ENCODE measurements at regions of chr10 and their contacts with region 1.

Region 1: DNA sequence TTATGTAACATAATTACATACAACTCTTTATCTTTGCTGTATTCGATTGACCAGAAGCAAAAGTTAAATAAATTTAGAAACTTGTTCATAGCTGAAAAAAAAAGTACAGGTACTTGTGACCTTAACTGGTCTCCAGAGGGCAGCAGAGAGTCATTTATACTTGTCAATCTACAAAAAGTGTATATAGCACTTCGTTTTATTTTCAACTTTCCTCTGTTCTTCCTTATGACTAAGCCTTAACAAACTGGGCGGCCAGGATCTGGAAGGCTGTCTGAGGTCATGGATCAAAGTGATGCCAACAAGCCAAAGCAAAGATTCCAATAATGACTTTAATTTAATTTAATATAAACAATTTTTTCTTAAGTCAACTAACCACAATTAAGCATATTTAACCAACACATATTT is 29.8 kb downstream of the C10orf67 start:
- DNase-seq: peak; percentile 48
- H3K4me3 ChIP-seq: no peak overlapping the region
- H3K27ac ChIP-seq: no peak overlapping the region
- H3K4me1 ChIP-seq: peaks cover 2 to 6% of the 10 kb centered on the region in 2 experiments; a peak in 2 of 4 replicates
- H3K27me3 ChIP-seq: no peaks in the 10 kb centered on the region
- CTCF ChIP-seq: peak; percentile 85
- EP300 ChIP-seq: peak in 1 of 2 experiments; percentile 40; a peak in 1 of 4 replicates
- RAD21 ChIP-seq: peak; percentile 91

Region 2: GRCh38 chr10:23293145-23293724 is 21.6 kb before region 1 on chr10:
- CTCF ChIA-PET with region 1: interaction called, 22 read pairs
- POLR2A ChIA-PET with region 1: no interaction called
- DNase-seq: peak; percentile 70
- H3K4me3 ChIP-seq: no peak overlapping the region
- H3K27ac ChIP-seq: no peak overlapping the region
- H3K4me1 ChIP-seq: no peaks in the 10 kb centered on the region; a peak in 1 of 4 replicates
- H3K27me3 ChIP-seq: no peaks in the 10 kb centered on the region
- CTCF ChIP-seq: peak; percentile 72
- EP300 ChIP-seq: no peak
- RAD21 ChIP-seq: peak; percentile 73

Region 3: DNA sequence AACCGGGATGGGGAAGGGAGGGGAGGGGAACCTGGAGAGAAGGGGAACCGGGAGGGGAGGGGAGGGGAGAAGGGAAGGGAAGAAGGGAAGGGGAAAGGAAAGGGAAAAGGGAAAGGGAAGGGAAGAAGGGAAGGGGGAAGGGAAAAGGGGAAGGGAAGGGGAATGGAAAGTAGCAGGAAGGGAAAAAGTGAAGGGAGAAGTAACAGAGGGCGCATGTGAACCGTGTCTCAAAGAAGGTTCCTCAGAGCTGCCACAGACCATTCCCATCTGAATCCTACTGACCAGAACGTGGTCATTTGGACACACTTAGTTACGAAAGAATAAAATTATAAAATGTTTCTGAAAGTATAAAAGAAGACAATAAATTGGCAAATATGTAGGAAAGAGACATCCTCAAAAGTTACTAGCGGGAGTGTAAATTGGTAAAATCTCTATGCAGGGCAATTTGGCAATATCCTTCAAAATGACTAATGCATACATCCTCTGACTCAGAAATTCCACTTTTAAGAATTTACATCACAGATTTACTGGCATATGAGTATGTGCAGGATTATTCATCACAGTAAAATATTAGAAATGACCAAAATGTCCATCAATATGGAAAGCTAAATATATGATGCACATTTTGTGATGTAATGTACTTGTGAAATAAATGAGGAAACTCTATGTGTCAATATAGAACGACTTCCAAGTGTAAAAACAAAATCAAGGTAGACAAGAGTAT is 16.9 kb after region 1 on chr10:
- CTCF ChIA-PET with region 1: interaction called, 10 read pairs
- POLR2A ChIA-PET with region 1: no interaction called
- DNase-seq: no peak
- H3K4me3 ChIP-seq: no peak overlapping the region
- H3K27ac ChIP-seq: peak overlapping the region in 1 of 2 experiments; percentile 84; a peak in 2 of 4 replicates
- H3K4me1 ChIP-seq: peaks cover 0 to 13% of the 10 kb centered on the region in 2 experiments; a peak in 2 of 4 replicates
- H3K27me3 ChIP-seq: no peaks in the 10 kb centered on the region
- CTCF ChIP-seq: no peak
- EP300 ChIP-seq: peak; percentile 41 to 96; a peak in 3 of 4 replicates
- RAD21 ChIP-seq: no peak

Region 4: DNA sequence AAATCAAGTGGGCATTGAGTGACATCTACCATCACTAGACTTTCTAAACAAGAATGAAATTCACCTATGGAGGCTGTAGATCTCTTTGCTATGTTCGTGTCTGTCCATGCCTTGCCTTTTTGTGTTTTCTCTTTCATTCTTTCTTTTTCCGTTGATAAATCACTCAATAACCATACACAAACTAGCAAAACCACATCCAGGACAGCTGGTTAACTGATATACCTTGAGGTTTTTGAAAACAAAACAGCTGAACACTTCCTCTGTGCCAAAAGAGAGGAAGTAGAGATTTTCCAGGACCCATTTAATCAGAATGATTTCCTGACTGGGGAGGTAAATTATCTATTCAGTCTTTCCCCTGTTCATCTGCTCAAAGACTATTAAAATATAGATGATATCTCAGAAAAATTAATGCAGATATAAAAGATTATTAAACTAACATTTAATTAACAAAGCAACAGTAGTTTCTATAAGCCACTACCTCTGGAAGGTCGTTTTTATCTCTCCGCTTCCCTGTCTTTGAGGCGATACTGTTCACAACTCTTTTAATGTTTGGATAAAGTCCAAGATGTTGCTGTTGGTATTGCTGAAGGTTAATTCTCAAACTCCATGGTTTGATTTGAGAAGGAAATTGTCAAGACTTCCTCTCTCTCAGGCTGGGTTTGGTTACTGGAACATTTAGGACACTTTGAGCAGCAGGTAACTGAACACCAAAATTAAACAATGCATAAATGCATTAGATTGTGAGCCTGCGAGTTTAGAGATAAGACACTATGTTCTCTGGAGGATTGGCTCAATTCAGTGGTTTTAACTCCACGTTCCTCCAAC is 54.2 kb after region 1 on chr10:
- CTCF ChIA-PET with region 1: interaction called, 10 read pairs
- POLR2A ChIA-PET with region 1: no interaction called
- DNase-seq: no peak
- H3K4me3 ChIP-seq: no peak overlapping the region
- H3K27ac ChIP-seq: no peak overlapping the region
- H3K4me1 ChIP-seq: peaks cover 0 to 3% of the 10 kb centered on the region in 2 experiments; a peak in 1 of 4 replicates
- H3K27me3 ChIP-seq: no peaks in the 10 kb centered on the region
- CTCF ChIP-seq: no peak
- EP300 ChIP-seq: no peak
- RAD21 ChIP-seq: no peak

Region 5: GRCh38 chr10:23469596-23470237 is 154.9 kb after region 1 on chr10:
- CTCF ChIA-PET with region 1: no interaction called
- POLR2A ChIA-PET with region 1: no interaction called
- DNase-seq: no peak
- H3K4me3 ChIP-seq: no peak overlapping the region
- H3K27ac ChIP-seq: no peak overlapping the region
- H3K4me1 ChIP-seq: no peaks in the 10 kb centered on the region
- H3K27me3 ChIP-seq: no peaks in the 10 kb centered on the region
- CTCF ChIP-seq: no peak
- EP300 ChIP-seq: no peak
- RAD21 ChIP-seq: no peak

Region 6: GRCh38 chr10:23516530-23516929 is 201.7 kb after region 1 on chr10:
- CTCF ChIA-PET with region 1: interaction called, 28 read pairs
- POLR2A ChIA-PET with region 1: no interaction called
- DNase-seq: peak; percentile 28
- H3K4me3 ChIP-seq: no peak overlapping the region
- H3K27ac ChIP-seq: no peak overlapping the region
- H3K4me1 ChIP-seq: 0 out of 4 replicates have a peak, but pooled peaks cover 0 to 6% of the 10 kb centered on the region in 2 experiments
- H3K27me3 ChIP-seq: no peaks in the 10 kb centered on the region
- CTCF ChIP-seq: peak; percentile 71
- EP300 ChIP-seq: no peak
- RAD21 ChIP-seq: peak; percentile 71

Region 7: DNA sequence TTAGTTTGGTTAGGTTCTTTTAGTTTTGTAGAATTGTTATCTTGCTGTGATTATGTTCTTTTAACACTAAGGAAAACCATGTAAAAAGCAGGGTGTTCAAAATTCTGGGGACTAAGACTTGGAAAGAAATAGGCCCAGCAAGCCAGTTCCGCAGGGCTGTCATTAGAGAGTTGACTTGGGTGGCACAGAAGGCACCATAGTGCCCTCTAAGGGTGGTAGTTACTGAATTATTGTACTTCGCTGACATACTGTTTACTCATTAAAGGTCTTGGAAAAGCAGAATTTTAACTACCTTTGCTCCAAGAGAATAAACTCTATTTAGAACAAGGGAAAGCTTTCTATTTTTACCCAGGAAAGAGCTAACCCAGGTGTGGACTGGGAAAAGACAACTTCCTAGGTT is 210.6 kb after region 1 on chr10:
- CTCF ChIA-PET with region 1: interaction called, 183 read pairs
- POLR2A ChIA-PET with region 1: no interaction called
- DNase-seq: peak; percentile 37
- H3K4me3 ChIP-seq: no peak overlapping the region
- H3K27ac ChIP-seq: no peak overlapping the region
- H3K4me1 ChIP-seq: no peaks in the 10 kb centered on the region
- H3K27me3 ChIP-seq: no peaks in the 10 kb centered on the region
- CTCF ChIP-seq: peak; percentile 54
- EP300 ChIP-seq: no peak
- RAD21 ChIP-seq: peak; percentile 84

Region 8: DNA sequence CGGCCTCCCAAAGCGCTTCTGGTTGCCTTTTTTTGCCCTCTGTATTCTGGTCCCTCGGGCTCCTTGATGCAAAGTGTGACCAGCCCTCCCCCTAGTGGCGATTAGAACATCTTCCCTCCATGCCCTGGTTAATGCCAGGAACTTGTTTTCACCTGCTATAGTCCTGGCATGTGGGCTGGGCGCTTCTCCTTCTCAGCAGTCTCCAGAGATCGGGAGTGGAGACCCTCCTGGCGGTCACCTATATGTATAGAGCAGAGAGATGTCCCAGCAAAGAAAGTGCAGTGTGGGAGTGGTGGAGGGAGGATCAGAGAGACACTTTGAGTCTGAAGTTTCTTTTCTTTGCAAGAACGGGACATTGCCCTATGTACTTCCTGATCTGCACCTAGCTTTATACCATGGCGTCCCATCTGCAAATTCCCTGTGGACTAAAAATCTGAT is 388.2 kb after region 1 on chr10:
- CTCF ChIA-PET with region 1: interaction called, 16 read pairs
- POLR2A ChIA-PET with region 1: no interaction called
- DNase-seq: peak; percentile 65
- H3K4me3 ChIP-seq: no peak overlapping the region; a peak in 1 of 4 replicates
- H3K27ac ChIP-seq: no peak overlapping the region
- H3K4me1 ChIP-seq: no peaks in the 10 kb centered on the region
- H3K27me3 ChIP-seq: no peaks in the 10 kb centered on the region
- CTCF ChIP-seq: peak; percentile 81
- EP300 ChIP-seq: no peak
- RAD21 ChIP-seq: peak; percentile 74

Measured in SK-N-SH (cell line).